ENCODE measurements at regions of chr1 and their contacts with region 1.

Region 1: DNA sequence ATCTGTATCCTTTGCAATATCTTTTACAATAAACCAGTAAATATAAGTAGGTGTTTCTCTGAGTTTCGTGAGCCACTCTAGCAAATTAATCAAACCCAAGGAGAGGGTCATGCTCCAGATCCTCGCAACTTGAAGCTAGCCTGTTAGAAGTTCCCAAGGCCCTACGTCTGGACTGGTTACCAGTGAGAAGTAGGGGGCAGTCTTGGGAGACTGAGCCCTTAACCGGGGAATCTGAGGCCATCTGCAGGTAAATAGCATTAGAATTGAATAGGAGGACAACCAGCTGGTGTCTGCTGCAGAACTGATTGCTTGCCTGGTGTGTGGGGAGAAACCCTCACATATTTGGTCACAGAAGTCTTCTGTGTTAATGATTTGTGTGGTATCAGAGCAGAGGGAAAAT is 190.5 kb downstream of the RYR2 start:
- DNase-seq: no peak
- H3K4me3 Mint-ChIP-seq: no peak overlapping the region
- H3K27ac Mint-ChIP-seq: no peak overlapping the region
- H3K4me1 Mint-ChIP-seq: no peaks in the 10 kb centered on the region
- H3K27me3 Mint-ChIP-seq: peaks cover 29% of the 10 kb centered on the region
- CTCF ChIP-seq: no peak

Region 2: DNA sequence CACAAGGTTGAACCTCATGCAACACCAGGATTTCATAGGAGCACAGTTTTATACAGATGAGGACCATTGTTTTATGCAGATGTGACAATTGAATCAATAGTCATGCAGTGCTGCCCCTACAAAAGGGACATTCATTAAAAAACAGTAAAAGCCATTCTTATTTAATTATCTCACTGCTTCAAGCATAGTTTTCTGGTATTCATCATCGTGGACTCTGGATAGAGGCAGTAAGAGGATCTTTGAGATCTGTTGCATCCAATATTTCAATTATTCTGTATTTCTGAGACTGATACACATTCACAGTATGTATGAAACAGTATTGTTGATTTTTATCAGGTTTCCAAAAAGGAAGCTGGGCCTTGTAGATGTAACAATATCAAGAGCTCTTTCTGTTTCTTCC is 47.1 kb after region 1 on chr1:
- CTCF ChIA-PET with region 1: no interaction called
- POLR2A ChIA-PET with region 1: no interaction called
- intact Hi-C with region 1: loop called (anchors 5 kb)
- DNase-seq: no peak
- H3K4me3 Mint-ChIP-seq: no peak overlapping the region
- H3K27ac Mint-ChIP-seq: no peak overlapping the region
- H3K4me1 Mint-ChIP-seq: no peaks in the 10 kb centered on the region
- H3K27me3 Mint-ChIP-seq: peaks cover 56% of the 10 kb centered on the region
- CTCF ChIP-seq: no peak